Calu3 (cell line): ENCODE measurements at regions of chr12 and their contacts with region 1.

Region 1: DNA sequence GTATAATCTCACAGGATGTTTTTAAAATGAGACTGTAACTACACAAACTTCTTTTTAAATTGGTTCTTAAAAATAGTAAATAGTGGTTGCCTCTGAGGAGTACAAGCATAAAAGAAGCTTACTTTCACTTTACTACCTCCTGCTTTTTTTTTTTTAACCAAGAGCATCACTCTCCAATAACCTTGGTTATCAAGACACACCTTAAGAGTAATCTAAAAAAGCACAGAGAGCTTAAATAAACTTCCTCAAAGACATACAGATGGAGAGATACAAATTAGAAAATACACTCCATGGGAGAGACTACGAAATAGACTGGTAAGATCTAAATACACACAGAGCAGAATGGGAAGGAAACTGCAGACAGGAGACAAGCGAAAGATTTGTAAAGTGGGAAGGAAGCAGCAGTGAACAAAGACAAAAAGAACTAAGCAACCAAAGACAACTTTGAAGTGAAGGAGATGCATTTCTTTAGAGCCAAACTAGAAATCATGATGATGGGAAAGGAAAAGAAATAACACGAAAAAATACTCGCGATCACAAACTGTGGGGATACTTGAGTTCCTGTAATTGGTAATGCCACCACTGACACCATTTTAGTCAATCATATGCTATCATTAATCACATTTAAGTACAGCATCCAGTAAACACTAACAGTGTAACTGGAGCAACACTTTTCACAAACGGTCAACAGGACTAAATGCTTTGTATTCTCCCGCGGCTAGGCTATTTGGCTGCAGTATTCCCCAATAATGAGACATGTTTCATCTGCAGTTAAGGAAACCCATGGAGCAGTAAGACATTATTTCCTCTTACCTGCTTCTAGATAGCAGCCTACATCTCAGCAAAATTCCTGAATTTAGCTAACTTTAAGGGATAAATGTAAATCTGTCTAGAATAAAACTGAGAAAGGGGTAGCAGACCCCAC is 8.2 kb downstream of the SINHCAF start:
- DNase-seq: no peak
- H3K4me3 Mint-ChIP-seq: peak overlapping the region; percentile 66
- H3K27ac Mint-ChIP-seq: peak overlapping the region; percentile 33
- H3K4me1 Mint-ChIP-seq: peaks cover 53% of the 10 kb centered on the region
- H3K27me3 Mint-ChIP-seq: no peaks in the 10 kb centered on the region
- CTCF ChIP-seq: no peak

Region 2: GRCh38 chr12:31362759-31363415 is 45.2 kb after region 1 on chr12:
- CTCF ChIA-PET with region 1: no interaction called
- intact Hi-C with region 1: loop called (anchors 5 kb)
- DNase-seq: peak; percentile 40
- H3K4me3 Mint-ChIP-seq: peak overlapping the region; percentile 64
- H3K27ac Mint-ChIP-seq: peak overlapping the region; percentile 82
- H3K4me1 Mint-ChIP-seq: peaks cover 17% of the 10 kb centered on the region
- H3K27me3 Mint-ChIP-seq: no peaks in the 10 kb centered on the region
- CTCF ChIP-seq: no peak